Activated CD8-positive, alpha-beta memory T cell treated with anti-CD3 and anti-CD28 coated beads, Interleukin-2, amount 10 ng/mL, durations not matched to agents 7 days and 5 days (primary cell): ENCODE measurements at regions of chr1 and their contacts with region 1.

Region 1: GRCh38 chr1:150995896-150996295 is 10.8 kb downstream of the MINDY1 start:
- DNase-seq: peak; percentile 56
- ATAC-seq: peak; percentile 46
- H3K4me3 Mint-ChIP-seq: peak overlapping the region; percentile 23
- H3K27ac Mint-ChIP-seq: peak overlapping the region; percentile 49
- H3K4me1 Mint-ChIP-seq: peaks cover 15% of the 10 kb centered on the region
- H3K27me3 Mint-ChIP-seq: no peaks in the 10 kb centered on the region

Region 2: DNA sequence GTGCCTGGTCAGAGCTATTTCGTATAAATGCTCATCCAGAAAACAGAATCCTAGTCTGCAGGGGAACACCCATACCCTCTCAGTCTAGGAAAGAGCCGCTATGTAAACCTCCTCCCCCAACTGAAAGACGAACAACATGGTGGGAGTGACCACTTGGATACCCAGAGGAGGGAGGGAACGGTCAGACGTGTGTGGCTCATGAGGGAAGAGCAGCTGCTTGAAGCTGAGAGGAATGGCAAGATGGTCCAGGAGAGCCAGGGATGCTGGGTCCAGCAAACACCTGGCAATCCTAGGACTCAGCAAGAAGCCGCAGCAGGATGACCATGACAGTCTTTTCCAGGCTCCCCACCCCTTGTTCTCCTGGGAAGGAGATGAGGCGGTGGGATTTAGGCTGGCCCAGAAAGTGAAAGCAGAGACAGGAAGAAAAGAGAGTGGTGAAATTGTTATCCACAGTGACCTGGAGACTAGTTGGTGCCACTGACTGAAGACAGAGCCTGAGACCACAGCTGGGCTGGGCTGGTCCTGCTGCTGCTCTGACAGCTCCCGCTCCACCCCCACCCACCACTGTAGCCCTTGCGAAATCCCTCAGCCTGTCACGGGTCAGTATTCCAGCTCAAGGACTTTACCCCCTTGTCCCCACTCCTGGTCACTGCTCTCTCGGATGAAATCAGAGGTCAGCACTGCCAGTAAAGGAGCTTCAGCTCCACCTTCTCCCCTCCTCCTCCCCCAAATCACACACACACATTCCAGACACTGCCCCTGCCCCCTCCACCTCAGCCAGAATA is 24.9 kb before region 1 on chr1:
- CTCF ChIA-PET with region 1: interaction called, 104 read pairs
- DNase-seq: no peak
- ATAC-seq: no peak
- H3K4me3 Mint-ChIP-seq: no peak overlapping the region
- H3K27ac Mint-ChIP-seq: no peak overlapping the region
- H3K4me1 Mint-ChIP-seq: peaks cover 41% of the 10 kb centered on the region
- H3K27me3 Mint-ChIP-seq: no peaks in the 10 kb centered on the region

Region 3: GRCh38 chr1:150979092-150980056 is 16.5 kb before region 1 on chr1:
- CTCF ChIA-PET with region 1: interaction called, 104 read pairs
- DNase-seq: peak; percentile 92
- ATAC-seq: peak; percentile 70
- H3K4me3 Mint-ChIP-seq: peak overlapping the region; percentile 30
- H3K27ac Mint-ChIP-seq: peak overlapping the region; percentile 34
- H3K4me1 Mint-ChIP-seq: peaks cover 30% of the 10 kb centered on the region
- H3K27me3 Mint-ChIP-seq: no peaks in the 10 kb centered on the region

Region 4: GRCh38 chr1:151006327-151007052 is 10.6 kb after region 1 on chr1 and contains the start of gene MINDY1:
- CTCF ChIA-PET with region 1: interaction called, 81 read pairs
- DNase-seq: peak; percentile 59
- ATAC-seq: peak; percentile 14
- H3K4me3 Mint-ChIP-seq: peak within 1 kb of the TSS; percentile 99
- H3K27ac Mint-ChIP-seq: peak within 1 kb of the TSS; percentile 94
- H3K4me1 Mint-ChIP-seq: peaks cover 69% of the 10 kb centered on the region
- H3K27me3 Mint-ChIP-seq: no peaks in the 10 kb centered on the region
- total RNA-seq, gene MINDY1: 4.2 to 7.0 TPM